GM12878 (cell line): ENCODE measurements at regions of chr7 and their contacts with region 1.

Region 1: DNA sequence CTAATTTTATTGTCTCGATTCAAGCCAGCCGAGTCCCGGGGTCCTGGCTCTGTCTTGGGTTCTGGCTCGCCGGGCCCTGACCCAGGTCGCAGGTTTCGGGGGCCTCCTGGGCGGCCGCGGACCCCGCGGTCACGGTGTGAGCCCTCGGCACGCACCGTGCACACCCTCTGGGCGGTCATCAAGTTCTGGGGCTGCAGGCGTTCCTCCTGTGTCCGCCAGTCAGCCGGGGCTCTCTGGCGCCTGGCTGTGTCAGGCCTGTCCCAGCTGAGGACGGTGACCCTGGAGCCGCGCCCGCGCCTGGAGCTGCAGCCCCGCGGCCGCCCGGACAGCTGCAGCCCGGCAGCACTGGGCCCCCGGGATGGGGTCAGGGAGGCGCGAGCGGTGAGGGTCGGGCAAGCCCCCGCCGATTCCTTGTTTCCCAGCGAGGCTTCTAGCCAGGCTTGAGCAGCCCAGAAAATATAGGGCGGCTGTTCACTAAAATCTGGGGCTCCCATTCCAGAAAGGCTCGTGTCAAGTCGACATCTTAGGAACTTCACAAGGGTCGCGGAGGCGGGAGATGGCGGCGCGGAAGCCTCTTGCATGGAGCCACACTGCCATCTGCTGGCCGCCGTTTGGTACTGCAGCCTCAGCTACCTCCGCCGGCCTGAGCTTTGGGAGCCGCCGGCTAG is 4.2 kb upstream of the HOXA7 start:
- DNase-seq: peak; percentile 23
- ATAC-seq: peak; percentile 89
- H3K4me3 ChIP-seq: peak overlapping the region; percentile 72
- H3K27ac ChIP-seq: no peak overlapping the region
- H3K4me1 ChIP-seq: no peaks in the 10 kb centered on the region
- H3K27me3 ChIP-seq: peaks cover 17 to 38% of the 10 kb centered on the region in 2 experiments
- CTCF ChIP-seq: peak; percentile 87 to 98 (median 93)
- EP300 ChIP-seq: no peak
- POLR2A ChIP-seq: no peak
- RAD21 ChIP-seq: peak; percentile 70

Region 2: DNA sequence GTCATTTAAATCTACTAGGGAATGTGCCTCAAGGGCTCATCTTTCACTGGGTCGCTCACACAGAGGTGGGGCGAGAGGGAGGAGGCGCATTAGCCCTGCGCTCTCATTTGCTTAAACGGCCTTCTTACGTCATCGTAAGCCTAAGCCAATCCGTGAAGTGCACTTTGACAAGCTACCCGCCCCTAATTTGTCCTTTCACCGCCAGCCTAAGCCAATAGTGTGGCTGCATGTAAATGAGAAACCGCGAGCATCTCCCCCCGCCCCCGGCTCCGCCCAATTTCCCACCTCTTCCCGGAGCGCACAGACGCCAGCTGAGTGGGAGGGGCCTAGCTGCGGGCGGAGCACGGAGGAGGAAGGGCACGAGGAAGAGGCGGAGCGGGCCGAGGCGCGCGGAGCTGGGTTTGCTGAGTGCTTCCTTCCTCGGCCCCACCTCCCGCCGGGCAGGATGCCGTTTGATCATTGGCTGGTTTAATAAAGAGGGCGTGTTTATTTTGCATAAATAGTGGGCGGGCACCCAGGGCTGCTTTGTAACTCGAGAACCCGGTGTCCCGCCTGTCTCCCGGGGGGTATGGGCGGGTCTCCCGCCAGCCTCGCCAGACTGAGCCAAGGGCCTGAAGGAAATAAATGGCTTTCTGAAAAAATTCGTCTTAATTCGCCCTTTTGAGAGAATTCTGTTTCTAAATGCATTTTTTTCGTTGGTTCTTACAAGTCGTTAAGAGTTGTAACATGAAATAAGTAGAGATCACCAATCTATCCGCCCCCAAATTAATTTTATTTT is 1298.2 kb before region 1 on chr7:
- CTCF ChIA-PET with region 1: no interaction called
- POLR2A ChIA-PET with region 1: no interaction called
- RAD21 ChIA-PET with region 1: no interaction called
- SMC1A ChIA-PET with region 1: no interaction called
- in situ Hi-C with region 1: loop called (anchors 5 kb)
- intact Hi-C with region 1: no loop called
- DNase-seq: peak; percentile 95
- ATAC-seq: peak; percentile 93
- H3K4me3 ChIP-seq: peak overlapping the region; percentile 43; the same call in 1 of the 2 replicates
- H3K27ac ChIP-seq: no peak overlapping the region
- H3K4me1 ChIP-seq: peaks cover 4% of the 10 kb centered on the region; the same call in 1 of the 2 replicates
- H3K27me3 ChIP-seq: peaks cover 2 to 25% of the 10 kb centered on the region in 2 experiments
- CTCF ChIP-seq: no peak
- EP300 ChIP-seq: no peak
- POLR2A ChIP-seq: no peak
- RAD21 ChIP-seq: no peak

Region 3: GRCh38 chr7:26078437-26079336 is 1082.0 kb before region 1 on chr7:
- CTCF ChIA-PET with region 1: interaction called, 3 read pairs
- POLR2A ChIA-PET with region 1: no interaction called
- RAD21 ChIA-PET with region 1: no interaction called
- SMC1A ChIA-PET with region 1: interaction called, 3 read pairs
- in situ Hi-C with region 1: loop called (anchors 25 kb)
- intact Hi-C with region 1: no loop called
- DNase-seq: peak; percentile 36
- ATAC-seq: peak; percentile 98
- H3K4me3 ChIP-seq: no peak overlapping the region
- H3K27ac ChIP-seq: no peak overlapping the region
- H3K4me1 ChIP-seq: no peaks in the 10 kb centered on the region
- H3K27me3 ChIP-seq: peaks cover 2 to 5% of the 10 kb centered on the region in 2 experiments; a peak in 1 of 4 replicates
- CTCF ChIP-seq: peak; percentile 50 to 61 (median 53); a peak in 5 of 6 replicates
- EP300 ChIP-seq: no peak
- POLR2A ChIP-seq: no peak
- RAD21 ChIP-seq: peak; percentile 60

Region 4: GRCh38 chr7:26500749-26501352 is 659.8 kb before region 1 on chr7:
- CTCF ChIA-PET with region 1: interaction called, 3 read pairs
- POLR2A ChIA-PET with region 1: no interaction called
- RAD21 ChIA-PET with region 1: interaction called, 6 read pairs
- SMC1A ChIA-PET with region 1: interaction called, 3 read pairs
- in situ Hi-C with region 1: no loop called
- intact Hi-C with region 1: loop called (anchors 2 kb)
- DNase-seq: no peak
- ATAC-seq: peak; percentile 82
- H3K4me3 ChIP-seq: no peak overlapping the region
- H3K27ac ChIP-seq: no peak overlapping the region
- H3K4me1 ChIP-seq: no peaks in the 10 kb centered on the region
- H3K27me3 ChIP-seq: no peaks in the 10 kb centered on the region; a peak in 1 of 4 replicates
- CTCF ChIP-seq: peak; percentile 57 to 60 (median 57)
- EP300 ChIP-seq: no peak
- POLR2A ChIP-seq: no peak
- RAD21 ChIP-seq: peak; percentile 83

Region 5: DNA sequence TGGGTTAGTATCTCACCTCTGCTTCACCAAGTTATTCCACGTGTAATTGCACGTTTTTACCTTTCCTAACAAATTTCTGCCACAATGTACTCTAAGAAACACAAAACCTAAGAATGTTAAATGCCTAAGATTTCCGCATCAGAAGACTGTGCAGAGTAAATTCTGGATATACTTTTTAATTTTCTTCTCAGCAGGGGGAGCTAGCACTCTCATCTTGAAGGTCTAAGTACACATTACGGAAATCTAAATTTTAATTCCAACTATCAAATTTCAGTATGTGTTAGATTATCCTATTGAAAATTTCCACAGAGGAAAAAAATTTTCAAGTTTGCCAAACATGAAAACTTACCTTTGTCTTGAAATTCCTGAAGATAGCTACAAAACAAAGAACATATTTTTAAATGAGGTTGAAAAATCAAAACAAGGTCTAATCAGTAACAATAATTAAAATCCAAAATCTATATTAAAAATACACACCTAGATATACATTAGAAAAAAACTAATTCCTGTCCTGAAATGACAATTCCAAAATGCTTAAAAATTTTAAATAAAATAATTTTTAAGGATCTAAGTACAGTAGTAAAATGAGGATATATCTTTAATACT is 306.8 kb before region 1 on chr7:
- CTCF ChIA-PET with region 1: interaction called, 49 read pairs
- POLR2A ChIA-PET with region 1: no interaction called
- RAD21 ChIA-PET with region 1: interaction called, 11 read pairs
- SMC1A ChIA-PET with region 1: interaction called, 6 read pairs
- in situ Hi-C with region 1: no loop called
- intact Hi-C with region 1: loop called (anchors 5 kb)
- DNase-seq: no peak
- ATAC-seq: no peak
- H3K4me3 ChIP-seq: no peak overlapping the region
- H3K27ac ChIP-seq: no peak overlapping the region
- H3K4me1 ChIP-seq: 0 out of 2 replicates have a peak, but pooled peaks cover 5% of the 10 kb centered on the region
- H3K27me3 ChIP-seq: no peaks in the 10 kb centered on the region
- CTCF ChIP-seq: peak; percentile 27 to 42 (median 31); a peak in 4 of 6 replicates
- EP300 ChIP-seq: no peak
- POLR2A ChIP-seq: no peak
- RAD21 ChIP-seq: peak; percentile 50